Activated naive CD4-positive, alpha-beta T cell treated with anti-CD3 and anti-CD28 coated beads for 36 hours (primary cell): ENCODE measurements at regions of chr6 and their contacts with region 1.

Region 1: GRCh38 chr6:5302995-5303622 is 41.8 kb downstream of the FARS2 start:
- DNase-seq: peak; percentile 73
- H3K4me3 Mint-ChIP-seq: no peak overlapping the region
- H3K27ac Mint-ChIP-seq: peak overlapping the region; percentile 59
- H3K4me1 Mint-ChIP-seq: peaks cover 36% of the 10 kb centered on the region
- H3K27me3 Mint-ChIP-seq: no peaks in the 10 kb centered on the region

Region 2: DNA sequence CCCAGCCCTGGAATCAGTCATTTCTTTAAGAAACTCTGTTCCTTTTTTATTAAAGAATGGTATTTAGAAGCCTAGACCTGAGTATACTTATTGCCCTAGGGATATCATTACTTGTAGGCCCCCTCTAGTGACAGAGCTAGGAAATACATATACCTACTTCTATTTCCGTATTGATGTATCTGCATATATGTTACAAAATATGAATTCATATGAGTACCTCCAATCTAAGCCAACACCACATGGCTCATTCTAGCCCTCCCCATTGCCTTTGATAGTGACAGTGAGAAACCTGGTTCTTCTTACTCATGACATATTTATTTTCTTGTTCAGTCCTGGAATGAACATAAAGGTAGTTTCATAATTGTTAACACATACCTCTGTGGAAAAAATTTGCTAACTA is 95.4 kb after region 1 on chr6:
- CTCF ChIA-PET with region 1: no interaction called
- intact Hi-C with region 1: loop called (anchors 10 kb)
- DNase-seq: peak; percentile 64
- H3K4me3 Mint-ChIP-seq: no peak overlapping the region
- H3K27ac Mint-ChIP-seq: no peak overlapping the region
- H3K4me1 Mint-ChIP-seq: peaks cover 22% of the 10 kb centered on the region
- H3K27me3 Mint-ChIP-seq: no peaks in the 10 kb centered on the region

Region 3: DNA sequence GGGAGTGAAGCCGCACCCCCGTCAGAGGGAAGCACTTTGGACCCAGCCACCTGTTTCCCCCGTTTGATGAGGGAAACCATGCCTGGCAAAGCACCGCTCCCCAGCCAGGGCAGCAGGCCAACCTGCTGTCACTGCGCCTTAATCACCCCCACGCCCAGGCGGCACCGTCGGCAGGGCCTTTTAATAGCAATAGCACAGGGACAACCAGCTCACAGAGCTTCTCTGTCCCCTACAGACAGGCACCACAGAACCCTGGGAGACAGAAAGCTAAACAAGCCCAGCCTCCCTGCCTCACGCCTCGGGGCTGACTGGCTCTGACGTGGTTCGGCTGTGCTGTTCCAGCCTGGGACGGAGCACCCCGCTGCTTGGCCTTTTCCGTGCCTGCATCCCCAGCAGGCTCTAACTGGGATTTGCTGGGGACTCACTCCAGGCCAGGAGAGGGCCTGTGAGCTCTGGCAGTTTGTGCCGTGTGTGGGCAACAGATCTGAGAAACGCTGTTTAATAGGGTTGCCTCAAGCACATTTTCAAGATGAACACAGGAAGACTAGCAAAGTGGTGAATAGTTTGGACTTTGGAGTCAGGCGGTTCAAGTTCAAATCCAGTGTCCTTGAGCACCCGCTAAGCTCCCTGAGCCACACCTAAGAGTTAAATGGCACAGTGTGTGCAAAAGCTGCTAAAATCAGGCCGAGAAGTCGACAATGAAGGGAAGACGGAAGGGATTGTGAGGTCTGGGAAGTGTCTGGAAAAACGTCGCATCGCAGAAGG is 479.9 kb after region 1 on chr6:
- CTCF ChIA-PET with region 1: no interaction called
- intact Hi-C with region 1: no loop called
- DNase-seq: no peak
- H3K4me3 Mint-ChIP-seq: no peak overlapping the region
- H3K27ac Mint-ChIP-seq: no peak overlapping the region
- H3K4me1 Mint-ChIP-seq: peaks cover 14% of the 10 kb centered on the region
- H3K27me3 Mint-ChIP-seq: no peaks in the 10 kb centered on the region